Endothelial cell of umbilical vein (primary cell): ENCODE measurements at regions of chr14 and their contacts with region 1.

Region 1: GRCh38 chr14:73458151-73458976 is at the start of gene NUMB:
- DNase-seq: peak; percentile 100
- H3K4me3 ChIP-seq: peak within 1 kb of the TSS; percentile 76 to 98 (median 98)
- H3K27ac ChIP-seq: peak within 1 kb of the TSS; percentile 79
- H3K4me1 ChIP-seq: peaks cover 67% of the 10 kb centered on the region
- H3K27me3 ChIP-seq: no peaks in the 10 kb centered on the region
- CTCF ChIP-seq: no peak
- POLR2A ChIP-seq: peak; percentile 78
- total RNA-seq, gene NUMB: 116 and 128 TPM in 2 replicates

Region 2: DNA sequence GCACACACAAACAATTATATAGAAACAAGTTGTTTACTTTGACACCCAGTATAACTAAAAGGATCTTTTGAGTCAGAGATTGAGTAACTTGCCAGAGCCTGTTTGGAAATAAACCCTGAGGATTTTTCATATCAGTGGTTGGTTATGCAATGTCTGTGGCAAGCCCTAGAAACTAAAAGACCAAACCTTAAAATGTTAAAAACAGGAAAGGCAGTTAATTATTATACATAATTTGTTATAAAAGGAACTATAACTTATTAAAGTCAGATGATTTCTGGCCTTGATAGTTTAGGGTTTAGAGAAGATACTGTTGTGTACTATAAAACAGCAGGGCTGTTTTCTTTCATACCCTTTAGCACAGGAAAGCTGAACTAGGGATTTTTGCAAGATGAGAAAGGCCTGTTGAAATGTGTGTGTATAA is 278.0 kb before region 1 on chr14:
- CTCF ChIA-PET with region 1: no interaction called
- POLR2A ChIA-PET with region 1: no interaction called
- dilution Hi-C with region 1: loop called (anchors 25 kb)
- intact Hi-C with region 1: no loop called
- DNase-seq: no peak
- H3K4me3 ChIP-seq: no peak overlapping the region
- H3K27ac ChIP-seq: no peak overlapping the region
- H3K4me1 ChIP-seq: no peaks in the 10 kb centered on the region
- H3K27me3 ChIP-seq: no peaks in the 10 kb centered on the region
- CTCF ChIP-seq: no peak
- POLR2A ChIP-seq: no peak

Region 3: DNA sequence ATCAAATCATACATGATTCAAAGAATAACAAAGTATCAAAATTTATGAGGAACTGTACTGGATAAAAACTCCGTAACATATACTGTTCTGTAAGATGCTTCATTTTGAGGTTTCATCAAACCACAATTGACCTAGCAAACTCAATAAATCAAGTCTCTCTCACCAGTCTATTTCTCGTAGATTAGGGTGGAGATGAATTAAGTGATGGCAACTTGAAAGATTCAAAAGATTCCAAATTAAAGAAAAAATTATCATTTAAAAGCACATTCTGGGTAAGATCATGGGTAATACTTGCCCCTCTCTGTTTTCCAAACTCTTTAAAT is 146.7 kb before region 1 on chr14:
- CTCF ChIA-PET with region 1: no interaction called
- POLR2A ChIA-PET with region 1: no interaction called
- dilution Hi-C with region 1: no loop called
- intact Hi-C with region 1: loop called (anchors 5 kb)
- DNase-seq: no peak
- H3K4me3 ChIP-seq: peak overlapping the region in 1 of 3 experiments; percentile 23
- H3K27ac ChIP-seq: peak overlapping the region; percentile 31
- H3K4me1 ChIP-seq: peaks cover 20% of the 10 kb centered on the region
- H3K27me3 ChIP-seq: no peaks in the 10 kb centered on the region
- CTCF ChIP-seq: no peak
- POLR2A ChIP-seq: no peak

Region 4: GRCh38 chr14:73424453-73424852 is 33.9 kb before region 1 on chr14:
- CTCF ChIA-PET with region 1: interaction called, 3 read pairs
- POLR2A ChIA-PET with region 1: interaction called, 5 read pairs
- dilution Hi-C with region 1: no loop called
- intact Hi-C with region 1: loop called (anchors 1 kb)
- DNase-seq: peak; percentile 88
- H3K4me3 ChIP-seq: peak overlapping the region in 1 of 3 experiments; percentile 34
- H3K27ac ChIP-seq: peak overlapping the region; percentile 92
- H3K4me1 ChIP-seq: peaks cover 50% of the 10 kb centered on the region
- H3K27me3 ChIP-seq: no peaks in the 10 kb centered on the region
- CTCF ChIP-seq: no peak
- POLR2A ChIP-seq: no peak